WTC11 (cell line): ENCODE measurements at regions of chr22 and their contacts with region 1.

Region 1: GRCh38 chr22:42294034-42294985 is 23.9 kb upstream of the TCF20 start:
- DNase-seq: peak; percentile 89
- ATAC-seq: peak; percentile 77
- H3K4me3 Mint-ChIP-seq: peak overlapping the region; percentile 47
- H3K27ac Mint-ChIP-seq: no peak overlapping the region
- H3K4me1 Mint-ChIP-seq: peaks cover 68% of the 10 kb centered on the region
- H3K27me3 Mint-ChIP-seq: 0 out of 2 replicates have a peak, but pooled peaks cover 2% of the 10 kb centered on the region
- CTCF ChIP-seq: no peak

Region 2: GRCh38 chr22:42214633-42215415 is 79.5 kb before region 1 on chr22:
- CTCF ChIA-PET with region 1: no interaction called
- POLR2A ChIA-PET with region 1: no interaction called
- DNase-seq: no peak
- ATAC-seq: no peak
- H3K4me3 Mint-ChIP-seq: no peak overlapping the region
- H3K27ac Mint-ChIP-seq: peak overlapping the region; percentile 33; the same call in 1 of the 2 replicates
- H3K4me1 Mint-ChIP-seq: peaks cover 34% of the 10 kb centered on the region
- H3K27me3 Mint-ChIP-seq: no peaks in the 10 kb centered on the region
- CTCF ChIP-seq: no peak

Region 3: DNA sequence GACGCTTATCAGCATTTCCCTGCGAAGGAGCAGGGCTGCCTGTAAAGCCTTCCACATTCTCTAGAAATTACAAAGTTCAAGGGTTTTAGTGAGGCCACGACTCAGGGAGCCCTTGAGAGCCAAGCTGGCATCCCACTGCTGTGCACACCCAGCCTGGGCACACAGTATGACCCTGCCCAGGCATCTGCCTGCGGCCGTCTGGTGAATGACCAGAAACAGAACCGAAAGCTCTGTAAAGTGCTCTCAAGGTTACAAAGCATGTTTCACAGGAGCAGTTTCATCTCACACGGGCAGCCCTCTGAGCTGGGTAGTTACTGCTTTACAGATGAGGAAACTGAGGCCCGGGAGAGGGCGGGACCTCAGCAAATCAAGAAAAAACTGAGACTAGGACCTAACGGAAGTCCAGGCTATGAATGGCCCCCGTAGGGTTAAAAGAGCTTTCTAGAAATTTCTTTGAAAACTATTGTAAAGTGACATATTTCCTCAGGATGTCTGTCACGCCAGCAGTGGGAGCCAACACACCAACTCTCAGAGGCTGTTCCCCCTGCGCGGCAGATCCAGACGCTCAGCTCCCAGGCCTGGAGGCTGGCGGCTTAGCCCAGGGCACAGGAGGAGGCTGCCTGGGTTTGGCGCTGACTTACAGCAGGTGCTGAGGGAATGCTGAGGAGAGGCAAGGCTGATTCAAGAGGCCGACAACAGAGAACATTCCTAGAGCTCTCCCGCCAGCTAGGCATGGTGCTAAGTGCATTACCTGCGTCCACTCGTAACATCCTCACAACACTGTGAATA is 16.1 kb before region 1 on chr22:
- CTCF ChIA-PET with region 1: interaction called, 12 read pairs
- POLR2A ChIA-PET with region 1: interaction called, 3 read pairs
- DNase-seq: no peak
- ATAC-seq: no peak
- H3K4me3 Mint-ChIP-seq: no peak overlapping the region
- H3K27ac Mint-ChIP-seq: no peak overlapping the region
- H3K4me1 Mint-ChIP-seq: peaks cover 39% of the 10 kb centered on the region
- H3K27me3 Mint-ChIP-seq: peaks cover 40% of the 10 kb centered on the region
- CTCF ChIP-seq: no peak